PC-9 (cell line): ENCODE measurements at regions of chr2 and their contacts with region 1.

Region 1: GRCh38 chr2:223797811-223798721 is 39.3 kb downstream of the AP1S3 start:
- DNase-seq: peak; percentile 46 to 73
- H3K4me3 ChIP-seq: no peak overlapping the region
- H3K27ac ChIP-seq: peak overlapping the region; percentile 95
- H3K4me1 ChIP-seq: peaks cover 76% of the 10 kb centered on the region
- H3K27me3 ChIP-seq: no peaks in the 10 kb centered on the region
- CTCF ChIP-seq: peak; percentile 95

Region 2: GRCh38 chr2:222707689-222708525 is 1090.2 kb before region 1 on chr2:
- CTCF ChIA-PET with region 1: interaction called, 3 read pairs
- POLR2A ChIA-PET with region 1: no interaction called
- intact Hi-C with region 1: loop called (anchors 2 kb)
- DNase-seq: peak; percentile 80 to 90
- H3K4me3 ChIP-seq: no peak overlapping the region
- H3K27ac ChIP-seq: peak overlapping the region; percentile 20
- H3K4me1 ChIP-seq: peaks cover 13% of the 10 kb centered on the region; the same call in 1 of the 2 replicates
- H3K27me3 ChIP-seq: no peaks in the 10 kb centered on the region
- CTCF ChIP-seq: peak; percentile 100

Region 3: DNA sequence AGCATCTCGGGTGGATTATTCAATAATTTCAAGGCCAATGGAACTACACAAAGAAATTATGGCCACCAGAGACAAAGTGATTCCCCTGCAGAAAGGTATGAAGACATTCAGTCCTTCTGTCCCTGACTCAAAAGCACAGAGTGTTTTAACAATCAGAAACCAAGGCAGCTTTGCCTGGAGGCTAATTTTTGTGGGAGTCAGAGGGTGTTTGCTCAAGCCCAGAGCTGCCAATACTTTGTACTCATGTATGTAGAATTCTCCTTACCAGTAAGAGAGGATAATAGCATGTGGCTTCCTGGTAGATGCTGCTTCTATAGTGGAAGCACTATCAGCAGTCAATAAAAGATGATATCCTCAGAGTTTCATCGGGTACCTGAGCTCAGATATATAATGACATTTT is 567.7 kb before region 1 on chr2:
- CTCF ChIA-PET with region 1: no interaction called
- POLR2A ChIA-PET with region 1: no interaction called
- intact Hi-C with region 1: loop called (anchors 5 kb)
- DNase-seq: peak; percentile 44 to 71
- H3K4me3 ChIP-seq: no peak overlapping the region
- H3K27ac ChIP-seq: no peak overlapping the region
- H3K4me1 ChIP-seq: peaks cover 15% of the 10 kb centered on the region
- H3K27me3 ChIP-seq: no peaks in the 10 kb centered on the region
- CTCF ChIP-seq: no peak

Region 4: GRCh38 chr2:223459328-223459939 is 338.6 kb before region 1 on chr2:
- CTCF ChIA-PET with region 1: no interaction called
- POLR2A ChIA-PET with region 1: no interaction called
- intact Hi-C with region 1: loop called (anchors 1 kb)
- DNase-seq: no peak
- H3K4me3 ChIP-seq: no peak overlapping the region
- H3K27ac ChIP-seq: no peak overlapping the region
- H3K4me1 ChIP-seq: peaks cover 21% of the 10 kb centered on the region
- H3K27me3 ChIP-seq: no peaks in the 10 kb centered on the region
- CTCF ChIP-seq: peak; percentile 75

Region 5: DNA sequence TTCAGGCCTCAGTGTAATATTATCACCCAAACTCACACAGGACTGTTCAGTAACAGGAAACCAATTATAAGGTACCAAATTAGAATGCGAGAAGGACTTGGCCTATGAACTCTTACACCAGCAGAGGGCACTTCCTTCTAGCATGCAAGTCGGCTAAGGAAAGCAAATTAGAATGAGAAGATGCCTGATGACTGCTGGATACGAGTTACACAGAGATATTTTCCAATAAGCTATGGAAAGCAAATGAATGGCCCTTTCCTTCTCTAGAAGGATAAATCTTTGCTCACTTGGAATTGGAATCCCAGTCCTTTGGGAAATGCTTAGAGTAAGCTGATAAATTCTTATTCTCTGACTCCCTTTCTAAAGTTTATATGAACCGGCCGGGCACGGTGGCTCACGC is 70.5 kb before region 1 on chr2:
- CTCF ChIA-PET with region 1: interaction called, 3 read pairs
- POLR2A ChIA-PET with region 1: interaction called, 3 read pairs
- intact Hi-C with region 1: loop called (anchors 1 kb)
- DNase-seq: peak; percentile 39 to 73
- H3K4me3 ChIP-seq: no peak overlapping the region
- H3K27ac ChIP-seq: no peak overlapping the region
- H3K4me1 ChIP-seq: peaks cover 19% of the 10 kb centered on the region
- H3K27me3 ChIP-seq: no peaks in the 10 kb centered on the region
- CTCF ChIP-seq: peak; percentile 73

Region 6: GRCh38 chr2:223860809-223861738 is 63.0 kb after region 1 on chr2:
- CTCF ChIA-PET with region 1: interaction called, 6 read pairs
- POLR2A ChIA-PET with region 1: interaction called, 3 read pairs
- intact Hi-C with region 1: loop called (anchors 1 kb)
- DNase-seq: peak; percentile 92 to 98
- H3K4me3 ChIP-seq: no peak overlapping the region; the same call in 1 of the 2 replicates
- H3K27ac ChIP-seq: peak overlapping the region; percentile 85
- H3K4me1 ChIP-seq: peaks cover 51% of the 10 kb centered on the region
- H3K27me3 ChIP-seq: no peaks in the 10 kb centered on the region
- CTCF ChIP-seq: peak; percentile 67